ENCODE measurements at regions of chr1 and their contacts with region 1.

Region 1: DNA sequence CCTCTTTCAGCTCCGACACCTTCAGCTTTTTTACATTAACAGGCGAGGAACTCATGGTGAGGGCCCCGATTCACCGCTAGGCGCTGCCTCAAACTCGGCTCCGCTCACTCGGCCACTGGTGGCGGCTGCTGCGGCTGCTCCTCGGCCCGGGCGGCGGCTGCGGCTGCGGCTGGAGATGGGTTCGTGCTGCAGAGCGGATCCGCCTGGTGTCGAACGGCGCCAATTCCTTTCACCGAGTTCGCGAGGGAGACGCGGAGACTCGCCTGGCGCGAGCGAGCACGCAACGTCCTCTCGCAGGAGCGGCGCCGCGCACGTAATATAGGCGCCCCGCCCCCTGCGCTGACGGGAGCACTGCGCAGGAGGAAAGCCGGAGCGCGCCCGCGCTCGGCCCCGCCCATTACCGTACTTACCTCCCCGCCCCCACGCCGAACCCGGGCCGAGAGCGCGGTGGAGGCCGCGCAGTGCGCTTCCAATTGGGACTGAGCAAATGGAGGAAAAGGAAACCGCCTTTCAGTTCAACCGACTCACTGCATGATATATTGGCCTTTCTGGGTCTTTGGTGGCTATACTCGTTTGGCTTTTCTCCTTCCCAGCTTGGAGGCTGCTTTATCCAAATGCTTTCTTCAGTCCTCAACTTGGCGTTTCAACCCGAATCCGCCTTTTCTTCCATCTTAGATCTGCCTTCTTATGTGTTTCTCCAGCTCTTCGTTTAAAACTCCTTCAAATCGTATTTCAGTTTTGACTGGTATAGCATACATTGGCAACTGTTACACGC is at the start of gene HNRNPU:
- DNase-seq: peak; percentile 93 to 99 (median 98)
- ATAC-seq: peak; percentile 81
- H3K4me3 ChIP-seq: peak within 1 kb of the TSS; percentile 78
- H3K4me3 Mint-ChIP-seq: peak within 1 kb of the TSS; percentile 86 to 98 (median 98)
- H3K27ac ChIP-seq: peak within 1 kb of the TSS; percentile 100
- H3K27ac Mint-ChIP-seq: peak within 1 kb of the TSS; percentile 93 to 100 (median 98)
- H3K4me1 ChIP-seq: peaks cover 23 to 25% of the 10 kb centered on the region in 2 donors
- H3K4me1 Mint-ChIP-seq: peaks cover 39 to 56% (median 51%) of the 10 kb centered on the region in 7 donors
- H3K27me3 ChIP-seq: no peaks in the 10 kb centered on the region
- H3K27me3 Mint-ChIP-seq: peaks cover 0 to 3% (median 0%) of the 10 kb centered on the region in 5 donors
- total RNA-seq, gene HNRNPU: 378 to 509 (median 428) TPM

Region 2: GRCh38 chr1:244461245-244462071 is 403.0 kb before region 1 on chr1 and contains the start of gene CATSPERE:
- CTCF ChIA-PET with region 1: no interaction called
- POLR2A ChIA-PET with region 1: interaction called, 8 read pairs
- intact Hi-C with region 1: loop called in 1 of 2 experiments (anchors 1 kb)
- DNase-seq: peak; percentile 55 to 79 (median 76)
- ATAC-seq: peak; percentile 99
- H3K4me3 ChIP-seq: peak within 1 kb of the TSS; percentile 77
- H3K4me3 Mint-ChIP-seq: peak within 1 kb of the TSS; percentile 69 to 89 (median 82)
- H3K27ac ChIP-seq: peak within 1 kb of the TSS; percentile 78
- H3K27ac Mint-ChIP-seq: peak within 1 kb of the TSS; percentile 78 to 97 (median 90)
- H3K4me1 ChIP-seq: peaks cover 5 to 6% of the 10 kb centered on the region in 2 donors
- H3K4me1 Mint-ChIP-seq: peaks cover 6 to 16% (median 13%) of the 10 kb centered on the region in 7 donors
- H3K27me3 ChIP-seq: no peaks in the 10 kb centered on the region
- H3K27me3 Mint-ChIP-seq: peaks cover 0 to 2% (median 0%) of the 10 kb centered on the region in 5 donors
- total RNA-seq, gene CATSPERE: 0.77 to 2.2 (median 1.7) TPM

Region 3: DNA sequence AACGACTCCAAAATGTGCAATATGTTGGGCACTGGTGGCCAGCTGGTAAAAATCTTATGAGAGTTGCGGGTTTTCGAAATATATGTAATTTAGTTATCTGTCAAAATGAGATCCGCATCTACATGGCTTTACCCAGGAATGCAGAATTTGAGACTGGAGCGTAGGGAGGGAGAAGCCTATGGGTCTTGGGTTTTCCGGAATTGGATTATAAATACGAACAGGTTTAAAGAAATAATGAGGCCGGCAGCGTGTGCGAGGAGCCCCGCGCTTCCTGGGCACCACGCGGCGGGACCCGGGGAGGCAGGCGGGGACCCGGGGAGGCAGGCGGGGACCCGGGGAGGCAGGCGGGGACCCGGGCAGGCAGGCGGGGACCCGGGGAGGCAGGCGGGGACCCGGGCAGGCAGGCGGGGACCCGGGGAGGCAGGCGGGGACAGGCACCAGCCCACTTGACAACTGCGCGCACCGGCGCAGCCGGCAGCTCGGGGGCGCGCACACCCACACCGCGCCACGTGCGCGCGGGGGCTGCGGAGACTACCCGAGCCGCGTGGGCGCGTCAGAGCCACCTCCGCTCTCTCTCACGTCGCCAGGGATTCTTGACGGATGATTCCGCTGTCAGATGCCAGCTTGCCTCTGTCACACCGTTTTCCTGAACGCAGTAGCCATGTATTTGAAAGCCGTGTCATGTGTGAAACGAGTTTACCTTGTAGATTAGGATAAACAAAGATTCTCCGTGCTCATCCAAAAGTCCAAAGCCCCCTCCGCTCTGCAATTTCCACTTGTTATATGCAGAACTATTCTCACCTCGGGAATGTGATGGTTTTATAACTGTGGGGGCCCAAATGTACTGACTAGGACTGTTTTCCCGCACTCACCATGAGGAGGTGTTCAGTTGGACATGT is 54.2 kb after region 1 on chr1:
- CTCF ChIA-PET with region 1: no interaction called
- POLR2A ChIA-PET with region 1: interaction called, 43 read pairs
- intact Hi-C with region 1: loop called (anchors 1 kb)
- DNase-seq: peak; percentile 66 to 85 (median 79)
- ATAC-seq: peak; percentile 98
- H3K4me3 ChIP-seq: peak overlapping the region; percentile 62
- H3K4me3 Mint-ChIP-seq: peak overlapping the region; percentile 88 to 96 (median 92)
- H3K27ac ChIP-seq: peak overlapping the region; percentile 56
- H3K27ac Mint-ChIP-seq: peak overlapping the region in 8 of 9 donors; percentile 73 to 96 (median 90)
- H3K4me1 ChIP-seq: peaks cover 6 to 7% of the 10 kb centered on the region in 2 donors
- H3K4me1 Mint-ChIP-seq: peaks cover 0 to 15% (median 10%) of the 10 kb centered on the region in 7 donors
- H3K27me3 ChIP-seq: no peaks in the 10 kb centered on the region
- H3K27me3 Mint-ChIP-seq: peaks cover 0 to 33% (median 0%) of the 10 kb centered on the region in 5 donors

Region 4: DNA sequence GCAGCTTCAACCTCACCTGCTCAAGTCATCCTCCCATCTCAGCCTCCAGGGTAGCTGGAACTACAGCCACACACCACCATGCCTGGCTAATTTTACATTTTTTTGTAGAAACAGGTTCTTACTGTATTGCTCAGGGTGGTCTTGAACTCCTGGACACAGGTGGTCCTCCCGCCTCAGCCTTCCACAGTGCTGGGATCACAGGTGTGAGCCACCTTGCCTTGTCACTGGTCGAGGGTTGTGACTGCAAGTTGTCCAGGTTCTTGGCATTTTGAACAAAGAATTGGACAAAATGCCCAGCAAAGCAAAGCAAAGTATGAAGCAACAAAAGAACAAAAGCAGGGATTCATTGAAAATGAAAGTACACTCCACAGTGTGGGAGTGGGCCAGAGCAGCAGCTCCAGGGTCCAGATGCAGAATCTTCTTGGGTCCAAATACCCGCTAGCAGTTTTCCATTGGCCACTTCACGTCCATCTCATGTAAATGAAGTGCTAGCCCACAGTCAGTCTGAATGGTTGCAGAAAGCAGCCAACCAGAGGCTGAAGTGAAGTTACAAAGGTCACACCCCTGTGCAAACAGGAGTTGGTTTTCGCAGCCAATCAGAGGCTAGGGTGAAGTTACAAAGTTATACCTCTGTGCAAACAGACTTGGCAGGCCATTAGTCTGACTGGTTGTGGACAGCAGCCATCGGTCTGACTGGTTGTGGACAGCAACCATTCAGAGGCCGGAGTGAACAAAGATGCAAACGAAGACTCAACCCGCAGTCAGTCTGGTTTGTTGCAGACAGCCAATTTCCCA is 180.8 kb after region 1 on chr1:
- CTCF ChIA-PET with region 1: interaction called, 5 read pairs
- POLR2A ChIA-PET with region 1: interaction called, 8 read pairs
- intact Hi-C with region 1: loop called (anchors 1 kb)
- DNase-seq: no peak
- ATAC-seq: no peak
- H3K4me3 ChIP-seq: no peak overlapping the region
- H3K4me3 Mint-ChIP-seq: no peak overlapping the region
- H3K27ac ChIP-seq: no peak overlapping the region
- H3K27ac Mint-ChIP-seq: no peak overlapping the region
- H3K4me1 ChIP-seq: no peaks in the 10 kb centered on the region
- H3K4me1 Mint-ChIP-seq: peaks cover 0 to 6% (median 0%) of the 10 kb centered on the region in 7 donors
- H3K27me3 ChIP-seq: no peaks in the 10 kb centered on the region
- H3K27me3 Mint-ChIP-seq: peaks cover 0 to 2% (median 0%) of the 10 kb centered on the region in 5 donors

Region 5: DNA sequence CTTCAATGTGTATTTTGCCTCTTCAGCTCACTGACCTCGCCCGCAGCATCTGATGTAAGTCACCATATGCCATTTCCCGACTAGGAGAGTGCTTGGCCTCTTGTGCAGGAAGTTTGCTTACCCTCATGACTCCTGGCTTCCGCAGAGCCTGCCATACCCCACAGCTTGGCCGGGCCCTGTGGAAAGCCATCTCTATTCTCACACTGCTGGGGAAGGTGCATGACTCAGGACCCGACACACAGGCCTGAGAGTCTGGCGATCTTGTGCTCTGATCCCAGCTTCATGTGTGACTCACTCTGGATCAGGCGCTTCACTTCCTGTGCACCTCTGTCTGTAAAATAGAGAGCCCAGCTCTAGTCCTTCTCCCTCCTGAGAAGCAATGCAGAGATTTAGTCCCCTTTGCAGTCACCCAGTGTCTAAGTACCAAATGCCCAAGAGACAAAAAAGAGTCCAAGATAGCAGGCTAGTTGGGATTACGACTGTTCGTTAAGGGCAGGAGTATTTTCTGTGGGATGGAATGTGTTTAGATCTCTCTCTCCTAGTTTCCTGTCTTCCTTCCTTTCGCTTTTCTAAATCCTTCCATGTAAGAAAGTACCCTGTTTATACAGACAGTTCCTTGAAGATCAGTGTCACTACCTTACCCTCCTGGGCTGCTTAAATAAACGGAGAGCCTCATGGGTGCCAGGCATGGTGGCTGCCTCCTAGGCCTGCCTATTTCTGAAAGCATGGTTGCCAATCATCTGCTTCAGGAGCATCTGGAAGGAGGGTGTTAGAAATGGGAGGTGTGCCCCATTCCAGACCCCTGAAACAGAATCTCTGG is 227.6 kb after region 1 on chr1:
- CTCF ChIA-PET with region 1: no interaction called
- POLR2A ChIA-PET with region 1: no interaction called
- intact Hi-C with region 1: no loop called
- DNase-seq: no peak
- ATAC-seq: no peak
- H3K4me3 ChIP-seq: no peak overlapping the region
- H3K4me3 Mint-ChIP-seq: no peak overlapping the region
- H3K27ac ChIP-seq: no peak overlapping the region
- H3K27ac Mint-ChIP-seq: no peak overlapping the region
- H3K4me1 ChIP-seq: no peaks in the 10 kb centered on the region
- H3K4me1 Mint-ChIP-seq: no peaks in the 10 kb centered on the region
- H3K27me3 ChIP-seq: no peaks in the 10 kb centered on the region
- H3K27me3 Mint-ChIP-seq: no peaks in the 10 kb centered on the region

Region 6: GRCh38 chr1:245953876-245954660 is 1089.6 kb after region 1 on chr1:
- CTCF ChIA-PET with region 1: no interaction called
- POLR2A ChIA-PET with region 1: no interaction called
- intact Hi-C with region 1: loop called in 1 of 2 experiments (anchors 10 kb)
- DNase-seq: peak in 6 of 9 donors; percentile 17 to 49 (median 34)
- ATAC-seq: peak; percentile 45
- H3K4me3 ChIP-seq: peak overlapping the region; percentile 31
- H3K4me3 Mint-ChIP-seq: peak overlapping the region in 8 of 10 donors; percentile 56 to 90 (median 78)
- H3K27ac ChIP-seq: peak overlapping the region; percentile 76
- H3K27ac Mint-ChIP-seq: peak overlapping the region in 1 of 9 donors; percentile 97
- H3K4me1 ChIP-seq: peaks cover 25 to 27% of the 10 kb centered on the region in 2 donors
- H3K4me1 Mint-ChIP-seq: peaks cover 9 to 29% (median 19%) of the 10 kb centered on the region in 7 donors
- H3K27me3 ChIP-seq: no peaks in the 10 kb centered on the region
- H3K27me3 Mint-ChIP-seq: no peaks in the 10 kb centered on the region